Naive thymus-derived CD4-positive, alpha-beta T cell (primary cell): ENCODE measurements at regions of chr5 and their contacts with region 1.

Region 1: DNA sequence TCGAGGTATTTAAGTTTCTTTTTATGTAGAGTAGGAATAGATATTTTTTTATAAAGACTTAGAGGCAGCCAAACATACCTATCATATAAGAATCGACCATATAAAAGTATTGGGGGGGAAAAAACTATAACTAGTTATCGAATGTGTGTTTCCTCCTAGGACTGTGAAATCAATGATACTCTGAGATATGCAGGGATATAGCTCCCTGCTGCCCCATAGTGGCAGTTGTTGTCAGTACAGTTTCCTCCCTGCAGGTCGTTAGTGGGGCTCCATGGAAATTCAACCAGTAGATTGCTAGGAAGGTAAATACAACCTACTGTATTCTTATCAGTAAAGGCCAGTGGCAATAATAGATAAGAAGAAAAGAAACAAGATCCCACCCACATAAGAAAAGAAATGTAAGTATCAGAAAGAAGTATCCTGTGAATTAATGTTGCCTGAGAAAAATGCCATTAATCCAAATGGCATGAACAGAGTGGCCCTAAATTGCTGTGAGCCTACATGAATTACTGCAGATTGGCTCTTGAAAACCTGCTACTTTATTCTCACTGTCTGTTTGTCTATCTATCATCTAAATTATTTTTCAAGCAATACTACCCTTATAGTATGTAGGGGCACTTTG is 136.9 kb upstream of the FBN2 start:
- DNase-seq: peak in 7 of 9 donors; percentile 1 to 23 (median 4)
- ATAC-seq: peak; percentile 59
- H3K4me3 ChIP-seq: no peak overlapping the region
- H3K4me3 Mint-ChIP-seq: no peak overlapping the region
- H3K27ac ChIP-seq: no peak overlapping the region
- H3K27ac Mint-ChIP-seq: no peak overlapping the region
- H3K4me1 ChIP-seq: no peaks in the 10 kb centered on the region
- H3K4me1 Mint-ChIP-seq: no peaks in the 10 kb centered on the region
- H3K27me3 ChIP-seq: no peaks in the 10 kb centered on the region
- H3K27me3 Mint-ChIP-seq: peaks cover 0 to 11% (median 3%) of the 10 kb centered on the region in 5 donors

Region 2: DNA sequence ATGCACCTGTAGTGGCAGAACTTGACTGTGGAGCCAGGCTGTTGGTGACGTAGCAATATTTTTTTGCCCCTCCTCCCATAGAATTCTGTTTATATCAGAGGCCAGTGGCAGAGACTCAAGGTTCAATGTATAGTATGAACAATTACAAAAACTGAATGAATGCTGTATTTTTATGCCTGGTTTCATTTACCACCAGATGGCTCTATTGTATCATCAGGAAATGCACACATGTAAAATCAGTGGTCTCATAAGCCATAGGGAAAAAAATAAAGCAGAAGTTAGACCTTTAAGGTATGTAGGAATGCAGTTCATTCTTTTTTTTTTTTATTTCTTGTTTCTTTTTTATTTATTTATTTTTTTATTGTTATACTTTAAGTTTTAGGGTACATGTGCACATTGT is 928.2 kb before region 1 on chr5:
- CTCF ChIA-PET with region 1: no interaction called
- POLR2A ChIA-PET with region 1: no interaction called
- intact Hi-C with region 1: loop called (anchors 10 kb)
- DNase-seq: peak in 2 of 9 donors; percentile 3 to 6
- ATAC-seq: no peak
- H3K4me3 ChIP-seq: no peak overlapping the region
- H3K4me3 Mint-ChIP-seq: no peak overlapping the region
- H3K27ac ChIP-seq: no peak overlapping the region
- H3K27ac Mint-ChIP-seq: no peak overlapping the region
- H3K4me1 ChIP-seq: no peaks in the 10 kb centered on the region
- H3K4me1 Mint-ChIP-seq: no peaks in the 10 kb centered on the region
- H3K27me3 ChIP-seq: no peaks in the 10 kb centered on the region
- H3K27me3 Mint-ChIP-seq: peaks cover 0 to 18% (median 10%) of the 10 kb centered on the region in 5 donors

Region 3: DNA sequence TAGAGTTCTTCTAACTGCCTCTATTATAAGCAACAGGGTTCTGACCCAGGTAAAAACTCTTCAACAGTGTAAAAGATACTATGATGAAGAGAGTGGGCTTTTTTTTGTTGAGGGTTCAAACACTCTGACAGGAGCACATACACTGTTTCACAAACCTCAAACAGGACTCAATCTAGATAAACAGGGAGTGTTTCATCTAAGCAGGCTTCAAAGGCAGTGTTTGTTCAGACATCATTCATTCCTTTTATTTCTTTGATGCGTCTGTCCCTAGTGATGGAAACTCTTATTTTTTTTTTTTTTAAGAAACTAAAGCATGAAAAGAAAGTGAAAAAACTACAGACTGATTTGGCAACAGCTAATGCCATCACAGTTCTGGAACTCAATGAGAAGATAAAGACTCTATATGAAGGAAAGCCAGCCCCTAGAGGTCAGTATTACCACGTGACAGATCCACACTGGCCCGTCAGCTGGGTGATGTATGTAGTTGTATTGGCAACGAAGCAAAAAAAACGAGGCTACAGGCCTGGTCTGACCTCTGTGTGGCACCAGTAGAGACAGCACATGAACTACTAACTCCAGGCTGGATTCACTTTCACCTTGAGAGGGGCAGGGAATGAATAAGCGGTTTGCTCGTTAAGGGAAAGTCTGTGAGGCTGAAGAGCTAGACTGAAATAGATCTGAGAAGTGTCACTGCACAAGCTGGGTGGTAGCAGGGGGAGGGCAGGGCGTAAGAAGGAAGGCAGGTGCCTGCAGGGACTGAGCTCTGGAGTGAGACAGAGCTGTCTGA is 799.5 kb before region 1 on chr5:
- CTCF ChIA-PET with region 1: no interaction called
- POLR2A ChIA-PET with region 1: no interaction called
- intact Hi-C with region 1: loop called in 1 of 2 experiments (anchors 10 kb)
- DNase-seq: peak in 4 of 9 donors; percentile 10 to 27 (median 16)
- ATAC-seq: peak; percentile 44
- H3K4me3 ChIP-seq: no peak overlapping the region
- H3K4me3 Mint-ChIP-seq: no peak overlapping the region
- H3K27ac ChIP-seq: no peak overlapping the region
- H3K27ac Mint-ChIP-seq: no peak overlapping the region
- H3K4me1 ChIP-seq: no peaks in the 10 kb centered on the region
- H3K4me1 Mint-ChIP-seq: peaks cover 0 to 3% (median 0%) of the 10 kb centered on the region in 7 donors
- H3K27me3 ChIP-seq: no peaks in the 10 kb centered on the region
- H3K27me3 Mint-ChIP-seq: peaks cover 0 to 7% (median 5%) of the 10 kb centered on the region in 5 donors

Region 4: DNA sequence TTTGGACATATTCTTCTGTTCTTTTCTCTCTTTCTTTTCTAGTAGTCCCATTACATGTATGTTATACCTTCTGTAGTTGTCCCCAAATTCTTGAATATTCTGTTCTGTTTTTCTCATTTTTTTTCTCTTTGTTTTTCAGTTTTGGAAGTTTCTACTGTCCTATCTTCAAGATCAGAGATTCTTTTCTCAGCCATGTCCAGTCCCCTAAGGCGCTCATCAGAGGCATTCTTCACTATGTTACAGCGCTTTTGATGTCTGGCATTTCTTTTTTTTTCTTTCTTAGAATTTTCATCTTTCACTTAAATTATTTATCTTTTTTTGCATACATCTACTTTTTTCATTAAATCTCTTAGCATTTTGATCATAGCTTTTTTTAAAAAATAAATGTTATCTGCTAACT is 133.7 kb after region 1 on chr5:
- CTCF ChIA-PET with region 1: no interaction called
- POLR2A ChIA-PET with region 1: no interaction called
- intact Hi-C with region 1: no loop called
- DNase-seq: no peak
- ATAC-seq: no peak
- H3K4me3 ChIP-seq: no peak overlapping the region
- H3K4me3 Mint-ChIP-seq: no peak overlapping the region
- H3K27ac ChIP-seq: no peak overlapping the region
- H3K27ac Mint-ChIP-seq: no peak overlapping the region
- H3K4me1 ChIP-seq: no peaks in the 10 kb centered on the region
- H3K4me1 Mint-ChIP-seq: no peaks in the 10 kb centered on the region
- H3K27me3 ChIP-seq: no peaks in the 10 kb centered on the region
- H3K27me3 Mint-ChIP-seq: no peaks in the 10 kb centered on the region